ENCODE measurements at regions of chr19 and their contacts with region 1.

Region 1: DNA sequence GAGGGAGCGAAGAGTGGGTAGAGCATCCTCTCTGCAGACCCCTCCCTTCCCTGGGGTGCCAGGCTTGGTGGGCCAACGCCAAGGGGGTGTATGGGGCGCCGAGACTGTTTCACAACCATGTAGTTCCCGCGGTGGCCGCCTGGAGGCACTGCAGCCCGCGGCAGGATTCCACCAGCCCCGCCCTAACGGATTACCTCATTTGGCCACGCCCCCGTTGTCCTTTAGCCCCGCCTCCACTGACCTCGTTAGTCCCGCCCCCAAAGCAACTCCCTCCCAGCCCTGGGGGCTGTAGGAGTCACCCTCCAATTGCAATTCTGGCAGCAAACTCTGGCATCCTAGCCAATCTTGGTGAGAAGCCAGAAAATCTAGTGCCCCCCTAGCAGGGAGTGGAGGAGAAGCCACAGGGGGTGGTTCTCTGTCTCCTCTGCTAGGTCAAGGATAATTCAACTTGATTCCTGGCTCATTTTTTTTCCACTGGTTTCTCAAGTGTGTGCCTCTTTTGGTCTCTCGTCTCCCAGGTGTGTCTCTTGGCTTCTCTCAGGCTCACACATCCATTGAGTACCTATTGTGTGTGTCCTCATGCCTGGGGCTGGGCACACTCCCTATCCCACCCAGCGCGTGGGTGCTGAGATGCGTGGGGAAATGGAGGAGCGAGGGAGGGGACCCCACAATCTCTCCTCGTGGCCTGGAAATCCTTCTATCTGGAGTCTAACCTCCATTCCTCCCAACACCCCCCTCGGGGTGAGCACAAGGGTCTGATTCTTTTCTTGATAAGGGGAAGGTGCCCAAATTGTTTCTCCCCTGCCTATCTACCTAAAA is 2.0 kb downstream of the OLFM2 start:
- DNase-seq: peak; percentile 74 to 82
- ATAC-seq: peak; percentile 30 to 76 (median 72)
- H3K4me3 ChIP-seq: no peak overlapping the region
- H3K27ac ChIP-seq: no peak overlapping the region
- H3K4me1 ChIP-seq: peaks cover 6% of the 10 kb centered on the region
- H3K27me3 ChIP-seq: peaks cover 5 to 48% (median 15%) of the 10 kb centered on the region in 3 donors
- CTCF ChIP-seq: peak; percentile 60

Region 2: GRCh38 chr19:10027158-10027693 is 92.9 kb after region 1 on chr19:
- intact Hi-C with region 1: loop called (anchors 2 to 5 kb)
- DNase-seq: no peak
- ATAC-seq: no peak
- H3K4me3 ChIP-seq: no peak overlapping the region
- H3K27ac ChIP-seq: no peak overlapping the region
- H3K4me1 ChIP-seq: no peaks in the 10 kb centered on the region
- H3K27me3 ChIP-seq: peaks cover 0 to 14% (median 0%) of the 10 kb centered on the region in 3 donors
- CTCF ChIP-seq: no peak

Region 3: DNA sequence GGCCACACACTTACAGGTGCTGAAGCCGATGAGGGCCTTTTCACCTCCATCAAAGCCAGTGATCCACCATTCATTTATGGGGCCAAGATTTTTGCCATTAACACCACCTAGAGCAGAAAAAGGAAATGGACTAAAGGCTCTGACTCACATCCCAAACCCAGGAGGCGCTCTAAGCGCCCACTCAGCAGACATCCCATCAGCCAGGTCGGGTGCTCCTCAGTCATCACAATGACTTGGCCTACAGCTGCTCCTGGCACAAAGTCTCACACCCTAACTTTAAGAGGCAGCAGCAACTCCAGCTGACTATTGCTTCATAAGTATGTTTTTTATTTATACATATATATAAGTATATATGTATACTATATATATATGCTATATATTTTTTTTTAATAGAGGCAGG is 221.5 kb after region 1 on chr19:
- intact Hi-C with region 1: loop called in 1 of 2 experiments (anchors 2 kb)
- DNase-seq: no peak
- ATAC-seq: no peak
- H3K4me3 ChIP-seq: no peak overlapping the region
- H3K27ac ChIP-seq: no peak overlapping the region
- H3K4me1 ChIP-seq: no peaks in the 10 kb centered on the region
- H3K27me3 ChIP-seq: no peaks in the 10 kb centered on the region
- CTCF ChIP-seq: no peak

Region 4: GRCh38 chr19:10251792-10252694 is 317.7 kb after region 1 on chr19 and contains the start of gene MRPL4:
- intact Hi-C with region 1: loop called in 1 of 2 experiments (anchors 5 kb)
- DNase-seq: peak; percentile 95 to 97
- ATAC-seq: peak; percentile 95 to 97 (median 96)
- H3K4me3 ChIP-seq: peak within 1 kb of the TSS; percentile 93
- H3K27ac ChIP-seq: peak within 1 kb of the TSS; percentile 89
- H3K4me1 ChIP-seq: peaks cover 4% of the 10 kb centered on the region
- H3K27me3 ChIP-seq: no peaks in the 10 kb centered on the region
- CTCF ChIP-seq: no peak
- total RNA-seq, gene MRPL4: 54.9 to 94.0 (median 58.9) TPM

Region 5: GRCh38 chr19:10388957-10389356 is 454.6 kb after region 1 on chr19:
- intact Hi-C with region 1: loop called in 1 of 2 experiments (anchors 5 kb)
- DNase-seq: peak; percentile 87 to 91
- ATAC-seq: peak; percentile 64 to 80 (median 76)
- H3K4me3 ChIP-seq: no peak overlapping the region
- H3K27ac ChIP-seq: no peak overlapping the region
- H3K4me1 ChIP-seq: no peaks in the 10 kb centered on the region
- H3K27me3 ChIP-seq: no peaks in the 10 kb centered on the region
- CTCF ChIP-seq: peak; percentile 93

Measured in psoas muscle (tissue), 8 donors.